ENCODE measurements at regions of chr19 and their contacts with region 1.

Region 1: DNA sequence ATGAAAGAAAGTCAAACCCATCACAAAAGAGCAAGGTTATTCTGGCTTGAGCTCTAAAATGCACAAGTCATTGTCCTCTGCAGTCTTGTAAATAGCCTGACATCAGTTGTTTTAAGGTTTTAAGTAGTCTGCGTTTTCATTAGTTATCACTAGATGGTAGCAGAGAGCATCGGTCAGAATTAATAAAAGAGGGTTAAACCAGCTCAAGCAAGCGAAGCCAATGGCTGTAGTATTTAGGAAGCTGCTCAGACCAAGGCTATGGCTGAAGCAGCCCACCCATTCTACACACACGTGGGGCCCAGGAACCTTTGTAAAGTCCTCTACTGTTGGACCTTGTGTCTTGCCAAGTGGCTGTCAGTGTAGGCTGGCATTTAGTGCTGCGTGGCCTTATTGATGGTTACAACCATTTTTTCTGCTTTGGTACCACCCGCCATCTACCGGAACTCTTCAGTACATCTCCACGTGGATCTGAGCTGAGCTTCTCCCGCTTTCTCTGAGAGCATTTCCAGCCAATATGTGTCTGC is 13.3 kb upstream of the ZNF57 start:
- DNase-seq: peak in 1 of 2 experiments; percentile 51
- H3K4me3 ChIP-seq: no peak overlapping the region
- H3K27ac ChIP-seq: no peak overlapping the region
- H3K4me1 ChIP-seq: no peaks in the 10 kb centered on the region
- H3K27me3 ChIP-seq: no peaks in the 10 kb centered on the region
- CTCF ChIP-seq: peak in 2 of 3 experiments; percentile 40 to 63; a peak in 3 of 4 replicates
- EP300 ChIP-seq: no peak
- POLR2A ChIP-seq: no peak
- RAD21 ChIP-seq: peak; percentile 46 to 56

Region 2: DNA sequence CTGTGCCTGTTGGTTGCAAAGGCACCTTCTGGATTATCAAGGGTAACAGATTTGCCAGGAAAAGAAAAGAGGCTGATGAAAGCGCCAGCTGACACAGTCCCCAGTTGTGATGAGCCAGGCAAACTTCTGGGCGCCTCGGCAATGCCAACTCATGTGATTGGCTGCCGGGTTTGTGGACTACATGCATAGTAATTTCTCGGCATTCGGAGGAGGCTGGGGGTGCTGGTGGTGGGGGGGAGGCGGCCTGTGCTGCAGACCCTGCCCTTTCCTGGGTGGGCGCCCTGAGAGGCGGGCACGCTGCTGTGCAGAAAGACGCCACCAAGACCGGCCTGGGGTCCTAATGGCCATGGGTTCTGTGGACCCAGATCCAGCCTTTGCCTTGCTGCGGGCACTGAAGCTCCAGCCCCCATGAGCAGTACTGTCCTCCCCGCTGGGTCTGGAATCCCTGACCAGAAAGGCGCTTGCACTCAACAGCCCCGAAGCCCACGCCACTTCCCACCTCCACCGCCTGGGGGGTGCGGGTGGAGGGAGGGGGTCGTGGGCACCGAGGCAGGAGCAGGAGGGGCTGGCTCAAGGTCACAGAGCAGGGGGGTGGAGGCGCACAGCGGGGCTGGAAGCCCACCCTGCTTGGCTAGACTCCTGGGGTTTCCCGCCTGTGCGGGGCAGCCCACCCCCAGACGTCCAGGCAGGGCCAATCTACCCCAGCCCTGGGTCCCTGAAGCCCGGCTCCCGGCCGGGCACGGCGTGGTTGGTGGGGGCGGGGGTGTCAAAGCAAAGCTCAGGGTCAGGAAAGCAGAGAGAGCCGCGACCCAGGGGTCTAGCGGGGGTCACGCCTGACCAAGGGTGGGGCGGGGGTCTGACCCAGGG is 167.3 kb before region 1 on chr19:
- CTCF ChIA-PET with region 1: no interaction called
- POLR2A ChIA-PET with region 1: no interaction called
- DNase-seq: peak in 1 of 2 experiments; percentile 76
- H3K4me3 ChIP-seq: peak overlapping the region; percentile 39 to 89 (median 52)
- H3K27ac ChIP-seq: no peak overlapping the region
- H3K4me1 ChIP-seq: peaks cover 0 to 15% (median 6%) of the 10 kb centered on the region in 4 experiments; a peak in 6 of 7 replicates
- H3K27me3 ChIP-seq: peaks cover 0 to 7% (median 3%) of the 10 kb centered on the region in 4 experiments; a peak in 4 of 7 replicates
- CTCF ChIP-seq: no peak
- EP300 ChIP-seq: no peak
- POLR2A ChIP-seq: no peak
- RAD21 ChIP-seq: no peak

Region 3: GRCh38 chr19:2900296-2901252 is 13.1 kb after region 1 on chr19 and contains the start of gene ZNF57:
- CTCF ChIA-PET with region 1: interaction called, 11 read pairs
- POLR2A ChIA-PET with region 1: interaction called, 5 read pairs
- DNase-seq: peak; percentile 94 to 96
- H3K4me3 ChIP-seq: peak within 1 kb of the TSS; percentile 73 to 99 (median 85)
- H3K27ac ChIP-seq: peak within 1 kb of the TSS; percentile 90
- H3K4me1 ChIP-seq: peaks cover 0 to 5% (median 3%) of the 10 kb centered on the region in 4 experiments; a peak in 3 of 7 replicates
- H3K27me3 ChIP-seq: no peaks in the 10 kb centered on the region
- CTCF ChIP-seq: no peak
- EP300 ChIP-seq: no peak
- POLR2A ChIP-seq: peak in 1 of 2 experiments; percentile 73; a peak in 2 of 3 replicates
- RAD21 ChIP-seq: no peak
- total RNA-seq, gene ZNF57: 8.9 and 9.4 TPM in 2 replicates

Region 4: GRCh38 chr19:2912306-2912705 is 24.9 kb after region 1 on chr19:
- CTCF ChIA-PET with region 1: interaction called, 10 read pairs
- POLR2A ChIA-PET with region 1: no interaction called
- DNase-seq: no peak
- H3K4me3 ChIP-seq: no peak overlapping the region
- H3K27ac ChIP-seq: no peak overlapping the region
- H3K4me1 ChIP-seq: no peaks in the 10 kb centered on the region
- H3K27me3 ChIP-seq: no peaks in the 10 kb centered on the region
- CTCF ChIP-seq: no peak
- EP300 ChIP-seq: no peak
- POLR2A ChIP-seq: no peak
- RAD21 ChIP-seq: no peak

Measured in H1 (cell line).